ENCODE measurements at regions of chr1 and their contacts with region 1.

Region 1: GRCh38 chr1:26472901-26473845 is 933 bp downstream of the HMGN2 start:
- DNase-seq: peak; percentile 95 to 96 (median 95)
- H3K4me3 ChIP-seq: peak overlapping the region; percentile 53 to 85
- H3K4me3 Mint-ChIP-seq: peak overlapping the region; percentile 83 to 92 (median 89)
- H3K27ac ChIP-seq: peak overlapping the region; percentile 96
- H3K27ac Mint-ChIP-seq: peak overlapping the region; percentile 82 to 100 (median 93)
- H3K4me1 ChIP-seq: peaks cover 49% of the 10 kb centered on the region
- H3K4me1 Mint-ChIP-seq: peaks cover 33 to 66% (median 46%) of the 10 kb centered on the region in 4 donors
- H3K27me3 ChIP-seq: no peaks in the 10 kb centered on the region
- H3K27me3 Mint-ChIP-seq: no peaks in the 10 kb centered on the region

Region 2: GRCh38 chr1:25848531-25848930 is 624.6 kb before region 1 on chr1:
- CTCF ChIA-PET with region 1: no interaction called
- POLR2A ChIA-PET with region 1: no interaction called
- intact Hi-C with region 1: no loop called
- DNase-seq: no peak
- H3K4me3 ChIP-seq: no peak overlapping the region
- H3K4me3 Mint-ChIP-seq: no peak overlapping the region
- H3K27ac ChIP-seq: no peak overlapping the region
- H3K27ac Mint-ChIP-seq: no peak overlapping the region
- H3K4me1 ChIP-seq: no peaks in the 10 kb centered on the region
- H3K4me1 Mint-ChIP-seq: no peaks in the 10 kb centered on the region
- H3K27me3 ChIP-seq: no peaks in the 10 kb centered on the region
- H3K27me3 Mint-ChIP-seq: no peaks in the 10 kb centered on the region

Region 3: GRCh38 chr1:26111530-26112406 is 361.4 kb before region 1 on chr1 and contains the start of gene PDIK1L:
- CTCF ChIA-PET with region 1: no interaction called
- POLR2A ChIA-PET with region 1: interaction called, 7 read pairs
- intact Hi-C with region 1: loop called (anchors 1 kb)
- DNase-seq: peak; percentile 93 to 94 (median 94)
- H3K4me3 ChIP-seq: peak within 1 kb of the TSS; percentile 49 to 91
- H3K4me3 Mint-ChIP-seq: peak within 1 kb of the TSS; percentile 92 to 96 (median 95)
- H3K27ac ChIP-seq: peak within 1 kb of the TSS; percentile 77
- H3K27ac Mint-ChIP-seq: peak within 1 kb of the TSS; percentile 88 to 98 (median 94)
- H3K4me1 ChIP-seq: peaks cover 34% of the 10 kb centered on the region
- H3K4me1 Mint-ChIP-seq: peaks cover 15 to 41% (median 32%) of the 10 kb centered on the region in 4 donors
- H3K27me3 ChIP-seq: no peaks in the 10 kb centered on the region
- H3K27me3 Mint-ChIP-seq: no peaks in the 10 kb centered on the region
- total RNA-seq, gene PDIK1L: 20.1 to 25.0 TPM

Region 4: GRCh38 chr1:26284597-26285360 is 188.4 kb before region 1 on chr1:
- CTCF ChIA-PET with region 1: no interaction called
- POLR2A ChIA-PET with region 1: interaction called, 10 read pairs
- intact Hi-C with region 1: no loop called
- DNase-seq: peak; percentile 91 to 99 (median 92)
- H3K4me3 ChIP-seq: peak overlapping the region; percentile 38 to 50
- H3K4me3 Mint-ChIP-seq: peak overlapping the region; percentile 82 to 94 (median 89)
- H3K27ac ChIP-seq: peak overlapping the region; percentile 91
- H3K27ac Mint-ChIP-seq: peak overlapping the region; percentile 94 to 100 (median 99)
- H3K4me1 ChIP-seq: peaks cover 95% of the 10 kb centered on the region
- H3K4me1 Mint-ChIP-seq: peaks cover 63 to 96% (median 81%) of the 10 kb centered on the region in 4 donors
- H3K27me3 ChIP-seq: no peaks in the 10 kb centered on the region
- H3K27me3 Mint-ChIP-seq: no peaks in the 10 kb centered on the region

Region 5: GRCh38 chr1:26358411-26359384 is 114.5 kb before region 1 on chr1:
- CTCF ChIA-PET with region 1: no interaction called
- POLR2A ChIA-PET with region 1: no interaction called
- intact Hi-C with region 1: no loop called
- DNase-seq: peak; percentile 79 to 95 (median 81)
- H3K4me3 ChIP-seq: peak overlapping the region in 1 of 2 donors; percentile 44
- H3K4me3 Mint-ChIP-seq: peak overlapping the region; percentile 58 to 88 (median 74)
- H3K27ac ChIP-seq: peak overlapping the region; percentile 40
- H3K27ac Mint-ChIP-seq: peak overlapping the region; percentile 79 to 97 (median 94)
- H3K4me1 ChIP-seq: peaks cover 56% of the 10 kb centered on the region
- H3K4me1 Mint-ChIP-seq: peaks cover 27 to 70% (median 41%) of the 10 kb centered on the region in 4 donors
- H3K27me3 ChIP-seq: no peaks in the 10 kb centered on the region
- H3K27me3 Mint-ChIP-seq: no peaks in the 10 kb centered on the region

Region 6: DNA sequence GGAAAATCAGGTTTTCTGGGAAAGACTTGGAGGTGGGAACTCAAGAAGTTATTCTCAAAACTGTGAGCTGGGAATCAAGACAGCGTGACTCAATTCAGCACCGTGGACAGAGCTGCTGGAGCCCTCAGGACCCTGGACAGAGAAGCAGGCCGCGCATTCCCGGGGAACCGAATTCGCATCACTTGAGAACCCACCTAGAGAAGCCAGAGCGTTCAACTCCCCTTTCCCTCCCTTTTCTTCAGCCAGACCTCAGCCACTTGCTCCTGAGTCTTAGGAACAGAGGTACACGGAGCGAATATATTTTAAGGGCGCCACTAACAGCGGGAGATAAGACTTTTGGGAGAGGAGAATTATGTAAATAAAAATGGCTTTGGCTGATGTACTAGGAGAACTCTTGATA is 64.6 kb before region 1 on chr1:
- CTCF ChIA-PET with region 1: no interaction called
- POLR2A ChIA-PET with region 1: interaction called, 3 read pairs
- intact Hi-C with region 1: loop called (anchors 2 kb)
- DNase-seq: peak; percentile 75 to 84 (median 78)
- H3K4me3 ChIP-seq: no peak overlapping the region
- H3K4me3 Mint-ChIP-seq: peak overlapping the region; percentile 23 to 79 (median 62)
- H3K27ac ChIP-seq: no peak overlapping the region
- H3K27ac Mint-ChIP-seq: peak overlapping the region in 2 of 7 donors; percentile 49 to 74
- H3K4me1 ChIP-seq: peaks cover 17% of the 10 kb centered on the region
- H3K4me1 Mint-ChIP-seq: peaks cover 9 to 24% (median 17%) of the 10 kb centered on the region in 4 donors
- H3K27me3 ChIP-seq: peaks cover 37% of the 10 kb centered on the region
- H3K27me3 Mint-ChIP-seq: peaks cover 32 to 42% of the 10 kb centered on the region in 2 donors

Region 7: GRCh38 chr1:26500488-26501175 is 27.5 kb after region 1 on chr1:
- CTCF ChIA-PET with region 1: interaction called, 7 read pairs
- POLR2A ChIA-PET with region 1: interaction called, 54 read pairs
- intact Hi-C with region 1: loop called (anchors 1 kb)
- DNase-seq: peak; percentile 85 to 87 (median 86)
- H3K4me3 ChIP-seq: peak overlapping the region; percentile 58 to 95
- H3K4me3 Mint-ChIP-seq: peak overlapping the region; percentile 83 to 90 (median 87)
- H3K27ac ChIP-seq: peak overlapping the region; percentile 87
- H3K27ac Mint-ChIP-seq: peak overlapping the region; percentile 85 to 95 (median 94)
- H3K4me1 ChIP-seq: peaks cover 16% of the 10 kb centered on the region
- H3K4me1 Mint-ChIP-seq: peaks cover 2 to 32% (median 12%) of the 10 kb centered on the region in 4 donors
- H3K27me3 ChIP-seq: no peaks in the 10 kb centered on the region
- H3K27me3 Mint-ChIP-seq: no peaks in the 10 kb centered on the region

Measured in CD4-positive, alpha-beta memory T cell (primary cell).